Dorsolateral prefrontal cortex (tissue), 120 donors: ENCODE measurements at regions of chr11 and their contacts with region 1.

Region 1: DNA sequence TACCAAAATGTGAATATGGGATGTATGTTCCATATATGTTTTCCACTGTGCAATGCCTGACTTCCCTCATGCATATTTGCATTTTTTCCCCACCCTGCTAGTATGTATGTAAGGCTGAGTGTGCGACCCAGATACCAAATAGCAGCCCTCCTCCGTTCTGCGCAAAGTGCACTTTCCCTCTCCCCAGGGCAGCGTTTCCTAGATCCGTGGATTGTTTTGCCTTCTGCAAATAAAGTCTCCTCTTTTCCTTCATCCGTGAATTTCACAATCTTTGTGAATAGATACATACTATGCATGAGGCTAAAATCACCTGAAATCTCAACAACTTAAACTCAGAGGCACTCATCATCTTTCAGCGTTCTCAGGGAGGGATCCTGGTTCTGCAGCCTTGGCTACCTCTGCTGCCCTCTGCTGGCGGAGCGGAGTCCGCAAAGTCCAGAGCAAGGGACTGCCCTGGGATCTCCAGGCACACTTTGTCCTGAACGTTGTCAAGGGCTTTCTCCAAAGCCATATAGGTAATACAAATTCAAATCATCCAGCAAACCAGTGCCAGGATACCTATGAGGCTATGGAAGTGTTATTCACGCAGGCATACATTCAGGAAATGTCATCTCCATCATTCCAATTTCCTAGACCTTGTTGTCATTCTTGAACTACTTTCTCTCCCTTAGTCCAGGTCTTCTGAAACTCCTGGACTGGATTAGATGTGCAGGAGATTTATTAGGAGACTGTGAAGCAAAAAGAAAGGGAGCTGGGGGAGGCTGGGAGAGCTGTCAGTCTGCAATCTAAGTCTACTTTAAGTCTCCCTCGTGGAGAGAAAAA is 53.1 kb downstream of the CNTF start:
- DNase-seq: peak; percentile 44 to 86 (median 78)
- H3K4me3 ChIP-seq: peak overlapping the region in 1 of 59 donors; percentile 15
- H3K27ac ChIP-seq: no peak overlapping the region
- H3K27me3 ChIP-seq: peaks cover 0 to 16% (median 6%) of the 10 kb centered on the region in 45 donors
- CTCF ChIP-seq: peak; percentile 56 to 94 (median 88)

Region 2: DNA sequence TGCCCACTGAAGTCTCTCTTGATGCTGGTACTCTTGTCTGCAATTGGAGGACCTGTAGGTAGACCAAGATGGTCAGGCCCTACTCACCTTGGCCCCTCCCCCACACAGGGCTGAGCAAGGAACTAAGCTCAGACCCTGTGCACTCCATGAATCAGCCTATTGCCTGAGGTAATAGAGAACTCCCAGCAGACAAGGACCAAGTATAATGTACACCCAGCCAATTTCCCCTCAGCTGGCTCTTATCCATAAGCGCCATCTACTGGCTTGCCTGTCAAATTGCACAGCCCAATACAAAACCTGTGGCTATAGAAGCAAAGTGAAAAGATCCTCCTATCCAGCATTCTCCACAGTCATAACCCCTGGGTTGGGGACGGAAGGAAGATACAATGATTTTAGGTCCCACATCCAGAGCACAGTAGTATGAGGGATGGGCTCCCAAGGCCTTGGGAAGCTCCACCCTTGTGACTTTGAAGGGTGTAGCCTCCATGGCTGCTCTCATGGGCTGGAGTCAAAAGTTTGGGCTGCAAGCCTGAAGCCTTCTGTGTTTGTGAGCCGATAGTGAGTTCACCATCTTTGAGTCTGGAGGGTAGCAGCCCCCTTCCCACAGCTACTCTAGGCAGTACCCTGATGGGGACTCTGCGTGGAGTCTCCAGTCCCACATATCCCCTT is 112.9 kb after region 1 on chr11:
- intact Hi-C with region 1: loop called in 1 of 2 experiments (anchors 10 kb)
- DNase-seq: peak in 4 of 10 donors; percentile 19 to 58 (median 38)
- H3K4me3 ChIP-seq: no peak overlapping the region
- H3K27ac ChIP-seq: no peak overlapping the region
- H3K27me3 ChIP-seq: peaks cover 0 to 7% (median 0%) of the 10 kb centered on the region in 45 donors
- CTCF ChIP-seq: peak in 54 of 56 donors; percentile 29 to 77 (median 64)